ENCODE measurements at regions of chr12 and their contacts with region 1.

Region 1: DNA sequence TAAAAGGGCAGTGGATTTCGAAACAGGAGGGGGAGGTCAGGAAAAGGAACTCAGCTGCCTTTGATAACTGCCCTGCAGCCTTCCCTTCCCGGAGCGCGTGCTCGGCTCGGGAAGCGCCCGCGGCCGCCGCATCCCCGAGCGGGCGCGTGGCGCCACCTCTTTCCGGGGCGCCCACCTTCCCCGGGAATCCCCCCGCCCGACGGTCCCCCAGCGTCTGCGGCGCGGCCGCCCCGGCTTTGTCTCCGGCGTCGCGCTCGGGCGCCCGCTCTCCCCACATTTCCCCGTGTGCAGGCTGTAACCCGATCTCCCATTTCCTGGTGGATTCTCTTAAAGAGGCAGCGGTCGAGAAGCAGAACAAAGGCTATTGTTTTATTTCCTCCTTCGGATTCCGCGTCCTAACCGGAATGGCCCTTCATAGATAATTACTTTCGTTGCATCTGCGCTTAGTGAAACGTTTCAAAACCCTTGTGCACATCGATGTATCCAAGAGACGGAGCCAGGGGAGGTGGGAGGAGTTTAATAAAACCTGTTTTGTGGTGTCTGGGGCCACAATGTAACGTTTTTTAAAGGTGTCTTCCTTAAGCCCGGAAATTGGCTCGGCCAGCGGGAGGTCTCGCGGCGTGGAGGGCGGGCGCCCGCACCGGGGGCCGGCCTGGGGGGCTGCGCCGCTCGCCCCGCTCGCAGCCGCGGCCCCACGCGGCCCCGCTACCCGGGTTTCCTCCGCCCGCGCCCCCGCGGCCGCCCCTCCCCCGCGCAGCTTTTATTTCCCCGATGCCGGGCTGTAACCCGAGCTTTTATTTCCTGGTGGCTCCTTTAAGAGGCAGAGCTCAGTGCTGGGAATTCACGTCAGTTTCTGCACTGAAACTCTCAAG is at the start of gene ETV6:
- DNase-seq: peak; percentile 51 to 85 (median 79)
- ATAC-seq: peak; percentile 73
- H3K4me3 ChIP-seq: peak within 1 kb of the TSS; percentile 92
- H3K4me3 Mint-ChIP-seq: peak within 1 kb of the TSS; percentile 82 to 99 (median 98)
- H3K27ac ChIP-seq: peak within 1 kb of the TSS; percentile 90
- H3K27ac Mint-ChIP-seq: peak within 1 kb of the TSS; percentile 91 to 99 (median 97)
- H3K4me1 ChIP-seq: peaks cover 6 to 22% of the 10 kb centered on the region in 2 donors
- H3K4me1 Mint-ChIP-seq: peaks cover 24 to 49% (median 36%) of the 10 kb centered on the region in 7 donors
- H3K27me3 ChIP-seq: no peaks in the 10 kb centered on the region
- H3K27me3 Mint-ChIP-seq: no peaks in the 10 kb centered on the region
- total RNA-seq, gene ETV6: 24.2 to 70.3 (median 38.0) TPM

Region 2: DNA sequence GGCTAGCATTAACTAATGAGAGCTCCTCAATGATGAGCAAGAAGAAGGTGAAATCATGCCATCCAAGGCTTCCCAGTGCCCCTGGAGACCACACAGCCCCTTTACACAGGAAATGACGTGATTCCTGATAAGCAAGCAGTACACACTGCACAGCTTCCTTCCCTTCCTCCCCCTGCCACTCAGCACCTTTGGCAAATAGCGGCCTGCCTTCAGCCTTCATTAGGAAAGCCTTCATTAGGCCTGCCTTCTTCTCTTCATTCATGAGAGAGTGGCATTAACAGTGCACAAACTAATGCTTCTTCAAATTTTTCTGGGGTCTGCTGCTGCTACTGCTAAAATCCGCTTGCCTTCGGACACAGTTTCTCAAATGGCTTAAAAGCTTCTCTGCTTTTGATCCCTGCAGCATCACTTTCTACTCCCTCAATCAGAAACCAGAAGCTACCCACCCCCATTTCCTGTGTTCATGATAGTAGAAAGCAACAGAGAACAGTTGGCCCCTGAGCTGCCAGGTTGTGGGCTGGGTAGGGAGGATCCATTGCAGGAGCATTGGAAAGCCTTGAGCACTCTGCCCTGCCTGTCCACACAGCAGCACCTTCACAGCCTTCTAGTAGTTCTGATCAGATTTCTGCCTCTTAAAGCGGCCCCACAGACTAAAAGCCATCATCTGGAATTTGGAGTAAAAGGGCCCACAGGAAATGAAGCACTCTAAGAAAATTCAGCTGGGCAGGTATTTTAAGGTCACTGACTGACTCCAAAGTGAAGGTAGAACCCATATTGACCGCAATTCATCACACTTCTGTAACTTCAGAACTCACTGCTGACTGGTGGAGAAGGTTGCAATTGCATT is 103.4 kb before region 1 on chr12:
- CTCF ChIA-PET with region 1: no interaction called
- POLR2A ChIA-PET with region 1: interaction called, 4 read pairs
- intact Hi-C with region 1: loop called in 1 of 2 experiments (anchors 2 kb)
- DNase-seq: peak in 8 of 9 donors; percentile 50 to 87 (median 81)
- ATAC-seq: peak; percentile 87
- H3K4me3 ChIP-seq: peak overlapping the region; percentile 50
- H3K4me3 Mint-ChIP-seq: peak overlapping the region; percentile 74 to 84 (median 80)
- H3K27ac ChIP-seq: peak overlapping the region; percentile 81
- H3K27ac Mint-ChIP-seq: peak overlapping the region; percentile 92 to 99 (median 96)
- H3K4me1 ChIP-seq: peaks cover 28 to 69% of the 10 kb centered on the region in 2 donors
- H3K4me1 Mint-ChIP-seq: peaks cover 31 to 88% (median 68%) of the 10 kb centered on the region in 7 donors
- H3K27me3 ChIP-seq: no peaks in the 10 kb centered on the region
- H3K27me3 Mint-ChIP-seq: peaks cover 0 to 5% (median 0%) of the 10 kb centered on the region in 5 donors

Region 3: DNA sequence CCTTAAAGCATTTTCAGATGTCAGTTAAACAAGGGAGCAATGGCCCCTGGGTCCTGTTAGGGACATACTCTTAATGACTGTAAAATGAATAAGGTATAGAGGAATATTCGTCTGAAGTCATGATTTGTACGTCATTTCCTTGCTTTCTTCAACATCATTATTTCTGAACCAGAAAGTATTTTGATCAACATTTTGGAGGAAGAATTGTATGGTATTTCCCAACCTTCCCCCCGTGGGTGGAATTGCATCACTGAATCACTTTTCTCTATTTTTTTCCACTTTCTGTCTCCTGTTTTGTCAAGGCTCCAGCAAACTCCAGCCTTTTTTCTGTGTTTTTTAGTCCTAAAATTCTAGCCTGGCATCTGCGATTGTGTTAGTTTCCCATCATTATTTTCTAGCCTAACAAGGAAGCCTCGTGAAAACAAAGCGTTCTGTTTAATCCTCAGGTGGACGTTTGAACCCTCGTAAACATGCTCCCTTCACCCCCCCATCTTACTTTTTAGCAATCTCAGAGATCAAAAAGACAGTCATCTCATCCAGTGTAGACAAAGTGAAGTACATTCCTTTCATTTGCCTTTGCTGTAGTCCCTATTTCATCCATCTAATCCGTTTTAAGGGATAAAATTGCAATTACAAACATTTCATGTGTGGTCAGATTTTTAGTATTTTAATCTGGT is 62.7 kb after region 1 on chr12:
- CTCF ChIA-PET with region 1: no interaction called
- POLR2A ChIA-PET with region 1: no interaction called
- intact Hi-C with region 1: loop called in 1 of 2 experiments (anchors 5 kb)
- DNase-seq: no peak
- ATAC-seq: no peak
- H3K4me3 ChIP-seq: no peak overlapping the region
- H3K4me3 Mint-ChIP-seq: no peak overlapping the region
- H3K27ac ChIP-seq: no peak overlapping the region
- H3K27ac Mint-ChIP-seq: no peak overlapping the region
- H3K4me1 ChIP-seq: no peaks in the 10 kb centered on the region
- H3K4me1 Mint-ChIP-seq: peaks cover 17 to 54% (median 31%) of the 10 kb centered on the region in 7 donors
- H3K27me3 ChIP-seq: no peaks in the 10 kb centered on the region
- H3K27me3 Mint-ChIP-seq: no peaks in the 10 kb centered on the region

Region 4: GRCh38 chr12:11877869-11878780 is 229.1 kb after region 1 on chr12:
- CTCF ChIA-PET with region 1: no interaction called
- POLR2A ChIA-PET with region 1: no interaction called
- intact Hi-C with region 1: loop called in 1 of 2 experiments (anchors 5 kb)
- DNase-seq: no peak
- ATAC-seq: no peak
- H3K4me3 ChIP-seq: no peak overlapping the region
- H3K4me3 Mint-ChIP-seq: no peak overlapping the region
- H3K27ac ChIP-seq: no peak overlapping the region
- H3K27ac Mint-ChIP-seq: peak overlapping the region in 2 of 9 donors; percentile 58 to 79
- H3K4me1 ChIP-seq: peaks cover 0 to 20% of the 10 kb centered on the region in 2 donors
- H3K4me1 Mint-ChIP-seq: peaks cover 29 to 66% (median 52%) of the 10 kb centered on the region in 7 donors
- H3K27me3 ChIP-seq: no peaks in the 10 kb centered on the region
- H3K27me3 Mint-ChIP-seq: no peaks in the 10 kb centered on the region

Region 5: DNA sequence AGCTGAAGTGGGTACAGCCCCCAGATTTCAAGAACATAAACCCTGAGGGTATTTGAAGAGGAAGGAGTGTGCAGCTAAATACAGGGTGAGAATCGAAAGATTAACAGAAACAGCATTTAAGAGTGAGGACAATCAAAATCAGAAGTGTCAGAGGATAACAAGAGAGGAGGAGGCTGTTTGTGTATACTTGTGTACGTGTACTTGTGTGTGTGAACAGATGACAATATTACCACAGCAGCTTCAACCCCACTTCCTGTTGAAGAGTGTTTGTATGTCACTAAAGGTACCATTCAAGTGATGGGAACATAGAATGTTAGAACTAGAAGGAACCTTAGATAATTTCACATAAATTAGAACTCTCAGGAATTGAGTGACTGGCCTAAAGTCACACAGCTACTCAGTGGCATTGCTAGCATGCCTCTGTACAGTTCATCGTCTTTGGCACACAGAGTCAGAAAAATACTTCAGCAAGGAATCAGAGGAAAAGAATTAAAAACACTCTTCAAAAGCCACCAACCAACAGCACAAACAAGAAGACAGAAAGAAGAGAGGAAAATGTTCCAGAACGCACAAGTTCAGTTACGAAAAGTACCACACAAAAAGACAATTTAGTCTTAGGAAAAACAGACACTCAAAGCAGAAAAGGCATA is 257.3 kb after region 1 on chr12:
- CTCF ChIA-PET with region 1: no interaction called
- POLR2A ChIA-PET with region 1: no interaction called
- intact Hi-C with region 1: no loop called
- DNase-seq: peak in 3 of 9 donors; percentile 13 to 19 (median 14)
- ATAC-seq: no peak
- H3K4me3 ChIP-seq: no peak overlapping the region
- H3K4me3 Mint-ChIP-seq: peak overlapping the region in 6 of 10 donors; percentile 2 to 69 (median 38)
- H3K27ac ChIP-seq: no peak overlapping the region
- H3K27ac Mint-ChIP-seq: peak overlapping the region in 8 of 9 donors; percentile 3 to 89 (median 58)
- H3K4me1 ChIP-seq: peaks cover 0 to 6% of the 10 kb centered on the region in 2 donors
- H3K4me1 Mint-ChIP-seq: peaks cover 11 to 45% (median 41%) of the 10 kb centered on the region in 7 donors
- H3K27me3 ChIP-seq: no peaks in the 10 kb centered on the region
- H3K27me3 Mint-ChIP-seq: peaks cover 0 to 4% (median 0%) of the 10 kb centered on the region in 5 donors

Region 6: DNA sequence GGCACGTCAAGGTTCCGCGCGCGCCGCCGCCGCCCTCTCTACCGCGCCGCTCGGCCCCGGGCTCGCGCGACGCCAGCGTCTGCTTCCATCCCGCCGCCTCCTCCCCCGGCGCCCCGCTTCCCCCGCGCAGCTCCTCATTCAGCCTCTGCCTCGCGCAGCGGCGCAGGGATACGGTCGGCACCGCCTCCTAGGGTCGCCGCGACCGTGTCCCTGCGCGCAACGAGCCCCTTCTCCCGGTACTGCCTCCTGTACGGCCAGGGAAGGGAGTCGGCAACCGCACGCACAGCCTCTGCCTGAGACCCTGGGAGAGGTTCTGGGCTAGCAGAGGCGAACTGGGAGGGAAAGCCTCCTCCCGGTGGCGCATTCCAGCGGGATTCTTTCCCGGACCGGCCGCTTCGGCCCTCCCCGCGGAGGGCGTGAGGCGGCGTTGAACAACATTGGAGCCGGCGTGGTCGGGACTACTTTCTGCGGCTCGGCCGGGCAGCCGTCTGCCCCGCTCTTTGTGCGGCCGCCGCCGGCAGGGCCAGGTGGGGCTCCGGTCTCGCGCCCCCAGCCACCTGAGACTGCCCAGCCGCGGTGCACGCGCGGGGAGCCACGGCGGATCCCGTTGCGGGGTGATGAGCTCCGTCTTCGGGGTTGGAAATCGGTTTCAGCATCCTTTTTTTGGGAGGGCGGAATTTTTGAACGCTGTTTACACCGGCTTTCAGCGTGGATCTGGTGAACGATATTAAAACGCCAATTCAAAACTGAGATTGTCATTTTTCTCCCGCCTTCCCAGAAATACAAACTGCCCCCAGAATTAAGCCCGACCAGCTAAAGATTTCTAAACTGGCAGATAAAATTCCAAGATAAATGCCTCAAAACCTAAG is 618.0 kb after region 1 on chr12 and contains the start of gene LRP6:
- CTCF ChIA-PET with region 1: no interaction called
- POLR2A ChIA-PET with region 1: no interaction called
- intact Hi-C with region 1: loop called in 1 of 2 experiments (anchors 2 kb)
- DNase-seq: peak; percentile 57 to 83 (median 75)
- ATAC-seq: peak; percentile 91
- H3K4me3 ChIP-seq: peak within 1 kb of the TSS; percentile 86
- H3K4me3 Mint-ChIP-seq: peak within 1 kb of the TSS; percentile 79 to 93 (median 88)
- H3K27ac ChIP-seq: peak within 1 kb of the TSS; percentile 68
- H3K27ac Mint-ChIP-seq: peak within 1 kb of the TSS; percentile 29 to 88 (median 73)
- H3K4me1 ChIP-seq: peaks cover 8 to 10% of the 10 kb centered on the region in 2 donors
- H3K4me1 Mint-ChIP-seq: peaks cover 14 to 40% (median 31%) of the 10 kb centered on the region in 7 donors
- H3K27me3 ChIP-seq: peaks cover 0 to 10% of the 10 kb centered on the region in 2 donors
- H3K27me3 Mint-ChIP-seq: peaks cover 0 to 53% (median 14%) of the 10 kb centered on the region in 5 donors
- total RNA-seq, gene LRP6: 1.6 to 12.6 (median 7.4) TPM

Region 7: GRCh38 chr12:12724661-12725545 is 1075.8 kb after region 1 on chr12:
- CTCF ChIA-PET with region 1: no interaction called
- POLR2A ChIA-PET with region 1: no interaction called
- intact Hi-C with region 1: loop called in 1 of 2 experiments (anchors 1 kb)
- DNase-seq: peak; percentile 78 to 97 (median 92)
- ATAC-seq: peak; percentile 77
- H3K4me3 ChIP-seq: peak overlapping the region; percentile 53
- H3K4me3 Mint-ChIP-seq: peak overlapping the region; percentile 87 to 98 (median 94)
- H3K27ac ChIP-seq: peak overlapping the region; percentile 99
- H3K27ac Mint-ChIP-seq: peak overlapping the region; percentile 96 to 99 (median 97)
- H3K4me1 ChIP-seq: peaks cover 28% of the 10 kb centered on the region in 2 donors
- H3K4me1 Mint-ChIP-seq: peaks cover 23 to 64% (median 56%) of the 10 kb centered on the region in 7 donors
- H3K27me3 ChIP-seq: no peaks in the 10 kb centered on the region
- H3K27me3 Mint-ChIP-seq: peaks cover 0 to 7% (median 0%) of the 10 kb centered on the region in 5 donors